PC-3 (cell line): ENCODE measurements at regions of chr4 and their contacts with region 1.

Region 1: GRCh38 chr4:68175562-68176155 is 46.0 kb upstream of the TMPRSS11F start:
- DNase-seq: peak; percentile 86
- ATAC-seq: peak; percentile 83
- H3K4me3 ChIP-seq: no peak overlapping the region
- H3K27ac ChIP-seq: no peak overlapping the region
- H3K4me1 ChIP-seq: peaks cover 2% of the 10 kb centered on the region
- H3K27me3 ChIP-seq: peaks cover 4% of the 10 kb centered on the region; the same call in 1 of the 2 replicates
- CTCF ChIP-seq: peak; percentile 97

Region 2: GRCh38 chr4:67746797-67747495 is 428.7 kb before region 1 on chr4:
- CTCF ChIA-PET with region 1: no interaction called
- POLR2A ChIA-PET with region 1: no interaction called
- intact Hi-C with region 1: loop called (anchors 1 kb)
- DNase-seq: peak; percentile 78
- ATAC-seq: no peak; the same call in 1 of the 2 replicates
- H3K4me3 ChIP-seq: no peak overlapping the region
- H3K27ac ChIP-seq: no peak overlapping the region
- H3K4me1 ChIP-seq: peaks cover 11% of the 10 kb centered on the region
- H3K27me3 ChIP-seq: no peaks in the 10 kb centered on the region
- CTCF ChIP-seq: peak; percentile 81

Region 3: DNA sequence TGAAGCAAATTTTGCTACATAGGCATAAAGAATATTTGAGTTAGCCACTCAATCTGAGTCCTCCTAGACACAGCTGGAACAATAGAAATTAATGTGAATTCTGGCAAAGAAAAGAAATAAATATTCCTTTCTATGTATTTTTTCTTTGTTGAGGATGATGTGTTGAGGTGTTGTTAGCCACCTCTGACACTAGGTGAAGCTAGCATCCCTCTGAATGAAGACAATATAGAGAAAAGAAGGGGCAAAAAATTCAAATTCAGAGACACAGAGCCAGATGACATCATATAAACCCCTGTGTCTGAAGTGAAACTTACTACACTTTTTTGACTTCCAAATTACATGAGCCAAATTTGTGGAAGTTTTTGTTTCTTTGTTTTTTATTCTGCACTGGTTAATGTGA is 257.2 kb before region 1 on chr4:
- CTCF ChIA-PET with region 1: no interaction called
- POLR2A ChIA-PET with region 1: no interaction called
- intact Hi-C with region 1: loop called (anchors 1 kb)
- DNase-seq: peak; percentile 33
- ATAC-seq: peak; percentile 62
- H3K4me3 ChIP-seq: no peak overlapping the region
- H3K27ac ChIP-seq: no peak overlapping the region
- H3K4me1 ChIP-seq: no peaks in the 10 kb centered on the region
- H3K27me3 ChIP-seq: no peaks in the 10 kb centered on the region
- CTCF ChIP-seq: peak; percentile 85

Region 4: GRCh38 chr4:67988991-67989390 is 186.7 kb before region 1 on chr4:
- CTCF ChIA-PET with region 1: no interaction called
- POLR2A ChIA-PET with region 1: no interaction called
- intact Hi-C with region 1: loop called (anchors 1 kb)
- DNase-seq: no peak
- ATAC-seq: no peak
- H3K4me3 ChIP-seq: no peak overlapping the region
- H3K27ac ChIP-seq: no peak overlapping the region
- H3K4me1 ChIP-seq: peaks cover 3% of the 10 kb centered on the region; the same call in 1 of the 2 replicates
- H3K27me3 ChIP-seq: peaks cover 34% of the 10 kb centered on the region; the same call in 1 of the 2 replicates
- CTCF ChIP-seq: no peak

Region 5: GRCh38 chr4:68079928-68080327 is 95.7 kb before region 1 on chr4:
- CTCF ChIA-PET with region 1: no interaction called
- POLR2A ChIA-PET with region 1: no interaction called
- intact Hi-C with region 1: loop called (anchors 1 kb)
- DNase-seq: peak; percentile 25
- ATAC-seq: no peak
- H3K4me3 ChIP-seq: no peak overlapping the region
- H3K27ac ChIP-seq: no peak overlapping the region
- H3K4me1 ChIP-seq: no peaks in the 10 kb centered on the region
- H3K27me3 ChIP-seq: peaks cover 14% of the 10 kb centered on the region; the same call in 1 of the 2 replicates
- CTCF ChIP-seq: peak; percentile 35; the same call in 1 of the 2 replicates